ENCODE measurements at regions of chr7 and their contacts with region 1.

Region 1: DNA sequence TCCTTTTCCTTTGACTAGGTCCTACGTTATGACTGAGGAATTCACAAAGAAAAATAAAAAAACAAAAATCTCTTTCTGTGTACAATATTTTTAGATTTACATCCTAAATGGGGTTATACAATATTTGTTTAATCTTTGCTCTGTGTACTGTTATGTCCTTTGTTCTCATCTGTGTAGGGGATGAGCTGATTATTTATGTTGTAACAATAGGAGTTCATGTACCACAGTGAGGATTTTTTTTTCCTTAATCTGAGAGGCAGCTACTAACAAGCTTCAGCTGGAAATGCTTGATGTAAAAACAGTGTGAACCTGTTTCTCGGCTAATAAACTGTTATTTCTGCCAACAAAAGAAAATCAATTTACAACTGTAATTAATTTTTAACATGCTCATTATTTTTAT is 58.0 kb downstream of the ORC5 start:
- DNase-seq: no peak
- H3K4me3 ChIP-seq: no peak overlapping the region
- H3K27ac ChIP-seq: no peak overlapping the region
- H3K4me1 ChIP-seq: no peaks in the 10 kb centered on the region
- H3K27me3 ChIP-seq: no peaks in the 10 kb centered on the region
- CTCF ChIP-seq: no peak

Region 2: GRCh38 chr7:103499907-103500306 is 649.9 kb before region 1 on chr7:
- CTCF ChIA-PET with region 1: no interaction called
- POLR2A ChIA-PET with region 1: no interaction called
- intact Hi-C with region 1: no loop called
- DNase-seq: no peak
- H3K4me3 ChIP-seq: no peak overlapping the region
- H3K27ac ChIP-seq: no peak overlapping the region
- H3K4me1 ChIP-seq: no peaks in the 10 kb centered on the region
- H3K27me3 ChIP-seq: peaks cover 37% of the 10 kb centered on the region
- CTCF ChIP-seq: no peak

Region 3: DNA sequence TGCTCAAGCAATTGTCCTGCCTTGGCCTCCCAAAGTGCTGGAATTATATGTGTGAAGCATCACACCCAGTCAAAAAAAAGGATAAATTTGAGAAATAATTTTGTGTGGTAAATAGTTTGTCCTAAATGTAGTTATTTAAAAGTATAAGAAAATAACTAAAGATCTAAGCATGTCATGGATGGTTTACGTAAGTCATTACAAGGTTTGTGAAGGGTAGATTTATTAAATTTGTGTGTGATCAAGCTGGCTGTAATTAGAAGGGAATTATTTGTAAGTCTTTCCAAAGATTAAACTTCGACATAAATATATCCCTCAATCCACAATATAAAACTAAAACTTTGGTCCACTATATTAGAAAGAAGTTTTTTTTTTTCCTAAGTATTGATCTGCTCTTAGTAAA is 29.4 kb after region 1 on chr7:
- CTCF ChIA-PET with region 1: no interaction called
- POLR2A ChIA-PET with region 1: interaction called, 10 read pairs
- intact Hi-C with region 1: no loop called
- DNase-seq: no peak
- H3K4me3 ChIP-seq: no peak overlapping the region
- H3K27ac ChIP-seq: no peak overlapping the region
- H3K4me1 ChIP-seq: no peaks in the 10 kb centered on the region
- H3K27me3 ChIP-seq: no peaks in the 10 kb centered on the region
- CTCF ChIP-seq: no peak

Region 4: DNA sequence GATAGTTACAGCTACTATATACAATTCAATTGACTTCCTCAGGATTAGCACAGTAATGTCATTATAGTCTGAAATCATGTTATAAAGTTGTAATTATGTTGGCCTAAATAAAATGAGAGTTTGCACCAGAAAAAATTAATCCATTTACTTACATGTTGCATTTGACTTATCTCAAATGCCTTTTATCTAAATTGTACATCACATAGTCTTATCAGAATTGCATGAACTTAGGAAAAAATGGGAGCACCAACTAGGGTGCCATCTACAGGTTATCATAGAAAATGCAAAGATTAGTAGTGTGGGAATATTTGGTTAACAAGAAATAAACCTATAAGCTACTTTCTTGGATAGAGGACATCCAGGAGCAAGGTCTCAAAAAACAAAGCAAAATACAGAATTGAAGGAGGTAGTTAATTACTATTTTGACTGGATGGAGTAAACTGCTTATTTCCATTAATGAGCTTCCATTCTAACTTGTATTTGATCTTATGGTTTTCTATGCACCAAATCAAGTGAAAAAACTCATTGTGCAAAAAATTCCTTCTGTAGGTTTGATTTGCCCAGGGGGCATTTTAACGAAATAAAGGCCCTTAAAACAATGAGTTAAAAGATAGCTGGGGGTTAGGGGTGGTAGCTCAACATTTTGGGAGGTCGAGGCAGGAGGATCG is 118.0 kb after region 1 on chr7:
- CTCF ChIA-PET with region 1: no interaction called
- POLR2A ChIA-PET with region 1: no interaction called
- intact Hi-C with region 1: no loop called
- DNase-seq: no peak
- H3K4me3 ChIP-seq: no peak overlapping the region
- H3K27ac ChIP-seq: no peak overlapping the region
- H3K4me1 ChIP-seq: no peaks in the 10 kb centered on the region
- H3K27me3 ChIP-seq: no peaks in the 10 kb centered on the region
- CTCF ChIP-seq: peak; percentile 55

Measured in PC-9 (cell line).